ENCODE measurements at regions of chr19 and their contacts with region 1.

Region 1: GRCh38 chr19:17075035-17075863 is at the starts of genes HAUS8 and MYO9B:
- DNase-seq: peak; percentile 100
- ATAC-seq: peak; percentile 89
- H3K4me3 ChIP-seq: peak within 1 kb of the TSS; percentile 84
- H3K27ac ChIP-seq: peak within 1 kb of the TSS; percentile 94
- H3K4me1 ChIP-seq: peaks cover 24% of the 10 kb centered on the region
- H3K27me3 ChIP-seq: no peaks in the 10 kb centered on the region
- CTCF ChIP-seq: no peak
- POLR2A ChIP-seq: peak; percentile 90
- RAD21 ChIP-seq: no peak
- total RNA-seq, gene HAUS8: 3.4 and 3.9 TPM in 2 replicates
- total RNA-seq, gene MYO9B: 59.7 and 61.8 TPM in 2 replicates

Region 2: GRCh38 chr19:17090583-17090982 is 15.3 kb after region 1 on chr19:
- CTCF ChIA-PET with region 1: interaction called, 3 read pairs
- POLR2A ChIA-PET with region 1: no interaction called
- dilution Hi-C with region 1: no loop called
- in situ Hi-C with region 1: no loop called
- intact Hi-C with region 1: loop called (anchors 1 kb)
- DNase-seq: peak; percentile 60
- ATAC-seq: no peak
- H3K4me3 ChIP-seq: no peak overlapping the region
- H3K27ac ChIP-seq: peak overlapping the region; percentile 97
- H3K4me1 ChIP-seq: peaks cover 32% of the 10 kb centered on the region
- H3K27me3 ChIP-seq: no peaks in the 10 kb centered on the region
- CTCF ChIP-seq: no peak
- POLR2A ChIP-seq: no peak
- RAD21 ChIP-seq: no peak

Region 3: GRCh38 chr19:17107525-17108452 is 32.5 kb after region 1 on chr19:
- CTCF ChIA-PET with region 1: no interaction called
- POLR2A ChIA-PET with region 1: no interaction called
- dilution Hi-C with region 1: no loop called
- in situ Hi-C with region 1: no loop called
- intact Hi-C with region 1: loop called (anchors 1 kb)
- DNase-seq: peak; percentile 98
- ATAC-seq: peak; percentile 97
- H3K4me3 ChIP-seq: no peak overlapping the region
- H3K27ac ChIP-seq: peak overlapping the region; percentile 86
- H3K4me1 ChIP-seq: peaks cover 7% of the 10 kb centered on the region
- H3K27me3 ChIP-seq: no peaks in the 10 kb centered on the region
- CTCF ChIP-seq: no peak
- POLR2A ChIP-seq: 0 out of 2 replicates have a peak, but pooled peaks have one; percentile 41
- RAD21 ChIP-seq: peak; percentile 23; the same call in 1 of the 2 replicates

Region 4: DNA sequence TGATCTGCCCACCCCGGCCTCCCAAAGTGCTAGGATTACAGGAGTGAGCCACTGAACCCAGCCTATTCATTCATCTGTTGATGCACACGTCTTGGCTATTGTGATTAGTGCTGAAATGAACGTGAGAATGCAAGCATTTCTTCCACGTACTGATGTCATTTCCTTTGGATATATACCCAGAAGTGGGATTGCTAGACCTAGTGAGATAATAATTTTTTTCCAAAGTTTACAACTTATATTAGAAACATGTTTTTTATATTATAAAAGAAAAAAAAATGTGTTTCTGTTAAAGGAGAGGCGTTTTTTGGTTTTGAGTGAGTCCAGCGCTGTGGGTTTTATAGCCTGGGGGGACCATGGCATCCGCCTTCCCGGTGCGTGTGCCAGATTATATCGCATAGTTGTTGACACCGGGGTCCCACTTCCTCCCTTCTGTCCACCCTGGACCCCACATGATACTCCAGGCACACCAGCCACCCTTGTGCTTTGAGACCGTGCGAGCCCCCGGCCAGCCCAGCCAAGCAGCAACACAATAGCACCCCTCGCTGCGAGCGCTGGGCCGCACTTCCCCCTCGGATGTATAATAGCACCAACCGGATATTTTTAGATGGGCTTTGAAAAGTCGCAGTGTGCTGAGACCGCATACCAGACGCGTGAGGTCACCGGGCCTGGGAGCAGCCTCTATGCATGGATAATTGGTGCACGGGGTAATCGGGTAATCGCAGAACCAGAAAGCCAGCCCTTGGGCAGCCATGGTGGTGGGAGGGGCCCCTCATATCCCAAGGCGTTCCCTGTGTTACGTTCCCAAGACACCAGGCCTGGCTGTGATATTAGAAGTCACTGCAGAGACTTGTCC is 60.0 kb after region 1 on chr19:
- CTCF ChIA-PET with region 1: no interaction called
- POLR2A ChIA-PET with region 1: no interaction called
- dilution Hi-C with region 1: no loop called
- in situ Hi-C with region 1: no loop called
- intact Hi-C with region 1: loop called (anchors 1 kb)
- DNase-seq: peak; percentile 97
- ATAC-seq: peak; percentile 97
- H3K4me3 ChIP-seq: peak overlapping the region; percentile 20; the same call in 1 of the 2 replicates
- H3K27ac ChIP-seq: peak overlapping the region; percentile 91
- H3K4me1 ChIP-seq: peaks cover 11% of the 10 kb centered on the region
- H3K27me3 ChIP-seq: no peaks in the 10 kb centered on the region
- CTCF ChIP-seq: peak; percentile 39
- POLR2A ChIP-seq: peak; percentile 64; the same call in 1 of the 2 replicates
- RAD21 ChIP-seq: peak; percentile 41; the same call in 1 of the 2 replicates

Region 5: DNA sequence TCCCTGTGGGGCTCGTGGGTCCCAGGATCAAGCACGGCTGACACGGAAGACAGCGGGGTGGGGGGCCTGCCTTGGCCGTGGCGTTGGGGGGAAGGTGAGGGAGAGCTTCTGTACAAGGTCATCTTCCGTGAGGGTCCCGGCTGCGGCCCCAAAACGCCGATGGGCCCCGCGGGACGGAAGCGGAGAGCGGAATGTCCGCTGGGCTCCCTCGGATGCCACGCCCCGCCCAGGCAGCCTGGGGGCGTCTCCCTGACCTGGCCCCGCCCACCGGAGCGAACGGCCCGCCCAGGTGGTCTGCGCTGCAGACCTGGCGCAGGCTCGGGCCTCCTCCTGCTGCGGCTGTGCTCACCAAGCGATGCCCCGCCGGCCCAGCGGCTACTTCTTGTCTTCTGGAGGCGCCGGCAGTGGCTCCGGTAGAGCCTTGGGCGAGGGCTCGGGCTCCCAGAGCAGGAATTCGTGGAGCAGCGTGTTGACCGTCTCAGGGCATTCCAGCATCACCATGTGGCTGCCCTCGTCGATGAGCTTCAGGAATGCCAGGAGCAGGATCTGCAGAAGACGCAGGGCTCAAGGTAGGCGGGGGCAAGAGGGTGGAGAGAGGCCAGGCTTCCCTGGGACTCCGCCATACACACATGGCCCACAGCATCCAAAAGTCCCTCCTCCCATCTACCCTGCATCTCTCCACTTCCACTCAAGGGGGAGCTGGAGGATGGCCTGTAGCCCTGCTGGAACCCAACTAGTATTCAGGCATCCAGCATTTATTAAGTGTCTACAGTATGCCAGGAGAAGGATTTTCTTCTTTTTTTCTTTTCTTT is 217.2 kb after region 1 on chr19:
- CTCF ChIA-PET with region 1: no interaction called
- POLR2A ChIA-PET with region 1: no interaction called
- dilution Hi-C with region 1: no loop called
- in situ Hi-C with region 1: loop called (anchors 5 kb)
- intact Hi-C with region 1: no loop called
- DNase-seq: peak; percentile 82
- ATAC-seq: peak; percentile 94
- H3K4me3 ChIP-seq: peak overlapping the region; percentile 44
- H3K27ac ChIP-seq: peak overlapping the region; percentile 93
- H3K4me1 ChIP-seq: peaks cover 2% of the 10 kb centered on the region; the same call in 1 of the 2 replicates
- H3K27me3 ChIP-seq: no peaks in the 10 kb centered on the region
- CTCF ChIP-seq: peak; percentile 82
- POLR2A ChIP-seq: no peak; the same call in 1 of the 2 replicates
- RAD21 ChIP-seq: peak; percentile 84